GM12878 (cell line): ENCODE measurements at regions of chr14 and their contacts with region 1.

Region 1: DNA sequence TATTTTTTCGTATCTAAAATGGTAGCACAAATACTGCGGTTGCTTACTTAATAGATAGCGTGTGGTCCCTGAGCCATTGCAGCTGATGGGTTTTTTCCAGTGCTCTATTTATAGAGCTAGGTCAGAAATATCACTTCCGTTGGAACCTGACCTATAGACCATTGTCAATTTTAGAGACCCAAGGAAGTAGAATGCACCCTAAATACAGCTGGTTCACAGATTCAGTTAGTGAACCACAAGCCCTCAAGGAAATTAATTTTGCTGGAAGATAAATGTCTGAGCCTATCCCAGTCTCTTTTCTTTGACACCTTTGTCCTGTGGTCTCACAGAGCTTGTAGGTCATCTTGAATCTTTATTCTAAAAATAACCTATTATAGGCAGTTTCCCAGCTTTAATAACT is 391.0 kb downstream of the ZFP36L1 start:
- DNase-seq: peak; percentile 96
- ATAC-seq: peak; percentile 57
- H3K4me3 ChIP-seq: no peak overlapping the region
- H3K27ac ChIP-seq: peak overlapping the region; percentile 100
- H3K4me1 ChIP-seq: peaks cover 66% of the 10 kb centered on the region
- H3K27me3 ChIP-seq: no peaks in the 10 kb centered on the region
- CTCF ChIP-seq: no peak
- EP300 ChIP-seq: peak; percentile 94 to 99
- POLR2A ChIP-seq: no peak
- RAD21 ChIP-seq: peak; percentile 21; the same call in 1 of the 2 replicates

Region 2: DNA sequence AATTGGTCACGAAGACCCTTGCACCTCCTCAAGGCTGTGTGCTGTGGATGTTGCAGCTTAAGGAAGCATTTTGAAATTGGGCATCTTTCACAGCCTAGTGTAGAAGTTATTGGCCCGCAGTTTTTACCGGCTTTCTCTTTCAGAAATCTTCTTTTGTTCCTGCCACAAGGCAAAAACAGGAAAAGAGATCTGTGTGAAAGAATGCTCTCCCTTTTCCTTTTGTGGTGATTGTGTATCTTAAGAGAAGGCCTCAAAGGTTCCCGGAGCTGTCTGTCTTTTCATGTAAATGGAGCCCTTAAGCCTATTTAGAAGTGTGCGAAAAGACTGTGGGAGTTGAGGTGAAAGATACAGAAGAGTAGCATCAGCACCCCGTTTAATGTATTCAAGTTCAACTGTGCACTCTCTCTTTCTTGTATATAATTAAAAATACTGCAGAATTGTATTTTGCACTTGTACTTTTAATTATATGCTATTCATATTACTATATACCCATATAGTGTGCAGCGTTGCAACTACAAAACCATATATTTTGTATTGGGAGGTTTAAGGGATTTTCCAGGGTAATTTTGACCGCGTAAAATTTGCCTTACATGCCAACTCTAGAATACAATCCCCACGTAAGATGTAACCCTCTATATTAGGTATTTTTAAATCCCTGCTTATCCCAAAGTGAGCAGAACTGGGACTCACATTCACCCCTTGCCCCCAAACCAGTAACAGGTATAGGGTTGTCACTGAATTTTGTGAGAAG is 140.6 kb before region 1 on chr14:
- CTCF ChIA-PET with region 1: no interaction called
- POLR2A ChIA-PET with region 1: interaction called, 3 read pairs
- RAD21 ChIA-PET with region 1: interaction called, 208 read pairs
- SMC1A ChIA-PET with region 1: interaction called, 251 read pairs
- in situ Hi-C with region 1: no loop called
- intact Hi-C with region 1: loop called (anchors 5 kb)
- DNase-seq: no peak
- ATAC-seq: peak; percentile 60
- H3K4me3 ChIP-seq: peak overlapping the region; percentile 40; the same call in 1 of the 2 replicates
- H3K27ac ChIP-seq: peak overlapping the region; percentile 58
- H3K4me1 ChIP-seq: peaks cover 45% of the 10 kb centered on the region
- H3K27me3 ChIP-seq: no peaks in the 10 kb centered on the region
- CTCF ChIP-seq: no peak
- EP300 ChIP-seq: no peak
- POLR2A ChIP-seq: no peak
- RAD21 ChIP-seq: no peak

Region 3: GRCh38 chr14:68307014-68307789 is 94.7 kb before region 1 on chr14:
- CTCF ChIA-PET with region 1: interaction called, 7 read pairs
- POLR2A ChIA-PET with region 1: interaction called, 25 read pairs
- RAD21 ChIA-PET with region 1: interaction called, 197 read pairs
- SMC1A ChIA-PET with region 1: interaction called, 44 read pairs
- in situ Hi-C with region 1: no loop called
- intact Hi-C with region 1: loop called (anchors 2 kb)
- DNase-seq: no peak
- ATAC-seq: no peak
- H3K4me3 ChIP-seq: no peak overlapping the region; the same call in 1 of the 2 replicates
- H3K27ac ChIP-seq: peak overlapping the region; percentile 98
- H3K4me1 ChIP-seq: peaks cover 53% of the 10 kb centered on the region
- H3K27me3 ChIP-seq: no peaks in the 10 kb centered on the region
- CTCF ChIP-seq: no peak
- EP300 ChIP-seq: no peak
- POLR2A ChIP-seq: no peak
- RAD21 ChIP-seq: no peak

Region 4: DNA sequence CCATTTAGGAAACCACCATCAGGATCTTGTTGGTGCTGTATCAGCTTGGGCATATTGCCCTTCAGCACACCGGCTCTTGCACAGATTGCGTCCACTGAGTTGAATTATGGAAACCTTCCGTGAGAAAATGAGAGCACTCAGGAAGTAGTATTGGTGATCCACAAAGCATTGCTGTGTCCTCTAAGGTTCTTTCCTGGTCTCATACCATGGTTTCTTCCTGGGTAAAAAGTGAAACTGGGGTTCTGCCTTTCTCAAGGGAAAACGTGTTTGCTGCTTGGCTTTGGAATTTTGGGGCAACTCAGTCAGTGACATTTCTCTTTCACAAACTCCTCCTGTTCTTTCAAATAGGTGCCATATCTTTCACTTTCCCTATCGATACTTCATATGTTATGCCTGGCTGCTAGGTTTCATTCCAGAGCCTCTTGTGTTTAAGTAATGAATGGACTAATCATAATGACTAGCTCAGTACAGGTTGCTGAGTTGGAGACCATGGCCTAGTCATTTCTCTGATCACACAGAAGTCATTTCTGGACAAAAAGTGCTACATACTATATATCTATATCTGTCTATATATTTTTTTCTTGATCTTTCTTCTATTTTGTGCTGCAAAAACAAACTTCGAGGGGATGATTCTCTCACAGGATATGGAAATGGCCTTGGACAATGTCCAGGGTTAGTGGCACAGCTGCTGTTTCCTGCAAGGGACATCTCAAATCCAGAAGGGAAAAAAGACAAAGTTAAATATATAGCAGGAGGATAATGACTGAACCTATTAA is 32.4 kb before region 1 on chr14:
- CTCF ChIA-PET with region 1: interaction called, 3 read pairs
- POLR2A ChIA-PET with region 1: interaction called, 103 read pairs
- RAD21 ChIA-PET with region 1: interaction called, 194 read pairs
- SMC1A ChIA-PET with region 1: interaction called, 181 read pairs
- in situ Hi-C with region 1: no loop called
- intact Hi-C with region 1: no loop called
- DNase-seq: peak; percentile 85
- ATAC-seq: peak; percentile 83
- H3K4me3 ChIP-seq: peak overlapping the region; percentile 24; the same call in 1 of the 2 replicates
- H3K27ac ChIP-seq: peak overlapping the region; percentile 94
- H3K4me1 ChIP-seq: peaks cover 55% of the 10 kb centered on the region
- H3K27me3 ChIP-seq: no peaks in the 10 kb centered on the region
- CTCF ChIP-seq: no peak
- EP300 ChIP-seq: no peak
- POLR2A ChIP-seq: no peak
- RAD21 ChIP-seq: 0 out of 2 replicates have a peak, but pooled peaks have one; percentile 20

Region 5: DNA sequence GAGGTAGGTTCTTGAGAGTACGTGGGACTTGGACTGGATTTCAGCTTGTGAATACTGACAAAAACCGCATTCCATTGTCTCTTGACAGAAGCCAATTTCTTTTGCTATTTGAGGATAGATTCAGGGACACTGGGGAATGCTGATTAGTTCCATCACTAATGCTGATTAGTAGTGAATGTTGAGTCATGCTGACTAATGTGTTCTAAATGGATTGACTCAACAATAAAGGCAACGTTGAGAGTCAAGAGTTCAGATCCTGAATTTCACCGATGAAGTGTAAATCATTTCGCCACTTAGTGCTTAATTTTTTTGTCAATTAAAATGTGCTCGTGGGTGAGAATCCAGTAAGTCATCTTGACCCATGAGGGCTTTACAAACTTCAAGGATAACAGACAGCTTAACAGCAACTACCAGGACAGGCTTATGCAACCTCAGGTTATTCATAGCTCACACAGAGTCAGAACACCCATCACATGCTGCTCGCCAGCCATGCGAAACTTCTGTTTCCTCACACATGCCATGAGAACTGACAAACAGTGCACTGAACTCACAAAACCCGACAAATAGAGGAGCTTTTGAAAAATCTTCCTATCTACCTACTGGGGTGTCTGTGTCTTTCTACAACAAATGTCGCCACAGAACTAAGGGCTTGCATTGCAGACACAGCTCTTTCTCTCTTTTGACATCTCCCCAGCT is 74.5 kb after region 1 on chr14:
- CTCF ChIA-PET with region 1: interaction called, 7 read pairs
- POLR2A ChIA-PET with region 1: interaction called, 4 read pairs
- RAD21 ChIA-PET with region 1: interaction called, 18 read pairs
- SMC1A ChIA-PET with region 1: interaction called, 20 read pairs
- in situ Hi-C with region 1: no loop called
- intact Hi-C with region 1: loop called (anchors 2 kb)
- DNase-seq: peak; percentile 93
- ATAC-seq: peak; percentile 96
- H3K4me3 ChIP-seq: no peak overlapping the region
- H3K27ac ChIP-seq: peak overlapping the region; percentile 88
- H3K4me1 ChIP-seq: peaks cover 27% of the 10 kb centered on the region
- H3K27me3 ChIP-seq: no peaks in the 10 kb centered on the region
- CTCF ChIP-seq: no peak
- EP300 ChIP-seq: peak; percentile 70 to 97; a peak in 3 of 4 replicates
- POLR2A ChIP-seq: no peak; the same call in 1 of the 2 replicates
- RAD21 ChIP-seq: peak; percentile 30; the same call in 1 of the 2 replicates

Region 6: GRCh38 chr14:68563246-68564131 is 161.6 kb after region 1 on chr14:
- CTCF ChIA-PET with region 1: no interaction called
- POLR2A ChIA-PET with region 1: no interaction called
- RAD21 ChIA-PET with region 1: no interaction called
- SMC1A ChIA-PET with region 1: no interaction called
- in situ Hi-C with region 1: no loop called
- intact Hi-C with region 1: no loop called
- DNase-seq: no peak
- ATAC-seq: no peak
- H3K4me3 ChIP-seq: no peak overlapping the region
- H3K27ac ChIP-seq: no peak overlapping the region
- H3K4me1 ChIP-seq: no peaks in the 10 kb centered on the region
- H3K27me3 ChIP-seq: no peaks in the 10 kb centered on the region
- CTCF ChIP-seq: no peak
- EP300 ChIP-seq: no peak
- POLR2A ChIP-seq: no peak
- RAD21 ChIP-seq: no peak

Region 7: DNA sequence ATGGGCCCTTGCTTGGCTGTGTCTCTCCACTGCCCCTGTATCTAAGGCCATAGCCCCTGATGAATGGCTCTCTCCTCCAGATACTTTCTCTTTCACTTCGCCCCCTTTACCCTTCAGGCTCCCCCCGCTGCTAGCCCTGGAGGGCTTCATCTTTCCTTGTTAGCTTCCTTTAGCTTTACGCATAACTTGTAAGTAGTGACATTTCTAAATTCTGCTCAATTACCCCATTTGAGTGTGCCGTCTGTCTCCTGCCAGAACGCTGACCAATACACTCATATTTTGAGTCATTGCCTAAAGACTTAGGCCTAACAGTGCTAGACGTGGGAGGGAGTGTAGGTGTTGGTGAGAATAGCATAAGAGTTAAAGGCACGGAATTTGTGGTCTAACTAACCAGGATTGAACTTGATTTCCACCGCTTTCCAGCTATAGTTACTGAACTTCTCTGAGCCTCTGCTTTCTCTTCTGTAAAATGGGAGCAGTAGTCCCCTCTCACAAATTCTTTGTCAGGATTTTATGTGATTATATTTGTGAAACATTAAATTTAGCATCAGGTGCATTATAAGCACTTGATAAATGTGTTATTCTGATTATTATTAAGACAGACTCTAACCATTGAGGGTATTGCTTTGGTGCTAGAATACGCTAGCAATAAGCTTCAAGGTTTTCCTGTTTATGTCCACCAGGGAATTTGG is 261.7 kb after region 1 on chr14:
- CTCF ChIA-PET with region 1: no interaction called
- POLR2A ChIA-PET with region 1: interaction called, 4 read pairs
- RAD21 ChIA-PET with region 1: interaction called, 11 read pairs
- SMC1A ChIA-PET with region 1: interaction called, 10 read pairs
- in situ Hi-C with region 1: no loop called
- intact Hi-C with region 1: loop called (anchors 5 kb)
- DNase-seq: peak; percentile 77
- ATAC-seq: peak; percentile 93
- H3K4me3 ChIP-seq: peak overlapping the region; percentile 39; the same call in 1 of the 2 replicates
- H3K27ac ChIP-seq: peak overlapping the region; percentile 66
- H3K4me1 ChIP-seq: peaks cover 22% of the 10 kb centered on the region
- H3K27me3 ChIP-seq: no peaks in the 10 kb centered on the region
- CTCF ChIP-seq: no peak
- EP300 ChIP-seq: peak; percentile 89 to 98
- POLR2A ChIP-seq: no peak
- RAD21 ChIP-seq: peak; percentile 25; the same call in 1 of the 2 replicates

Region 8: GRCh38 chr14:68816262-68816942 is 414.5 kb after region 1 on chr14:
- CTCF ChIA-PET with region 1: interaction called, 12 read pairs
- POLR2A ChIA-PET with region 1: interaction called, 11 read pairs
- RAD21 ChIA-PET with region 1: interaction called, 101 read pairs
- SMC1A ChIA-PET with region 1: interaction called, 52 read pairs
- in situ Hi-C with region 1: no loop called
- intact Hi-C with region 1: loop called (anchors 1 kb)
- DNase-seq: no peak
- ATAC-seq: peak; percentile 64
- H3K4me3 ChIP-seq: peak overlapping the region; percentile 58
- H3K27ac ChIP-seq: peak overlapping the region; percentile 95
- H3K4me1 ChIP-seq: peaks cover 58% of the 10 kb centered on the region
- H3K27me3 ChIP-seq: no peaks in the 10 kb centered on the region
- CTCF ChIP-seq: peak; percentile 89 to 99 (median 92); a peak in 5 of 6 replicates
- EP300 ChIP-seq: 0 out of 4 replicates have a peak, but pooled peaks of 1 of the 2 experiments have one; percentile 12
- POLR2A ChIP-seq: peak; percentile 80
- RAD21 ChIP-seq: peak; percentile 92